HCT116 (cell line): ENCODE measurements at regions of chr22 and their contacts with region 1.

Region 1: DNA sequence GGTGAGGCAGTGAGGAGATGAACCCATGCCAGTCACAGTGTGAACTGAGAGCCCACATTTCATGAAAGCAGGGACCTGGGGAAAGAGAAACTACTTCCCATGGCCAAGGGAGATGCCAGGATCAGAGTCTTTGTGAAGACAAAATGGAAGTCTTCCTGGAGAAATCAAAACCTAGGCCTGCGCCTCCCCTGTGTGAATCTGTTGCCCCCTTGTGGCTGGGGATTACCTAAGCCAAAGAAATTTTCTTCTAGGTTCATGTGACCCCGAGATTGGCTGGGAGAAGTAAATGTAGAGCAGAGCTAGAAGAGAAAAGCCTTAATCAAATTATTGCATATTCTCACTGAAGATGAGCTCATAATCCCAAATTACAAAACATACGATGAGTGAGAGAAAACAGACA is 1075.3 kb downstream of the TBC1D22A start:
- DNase-seq: peak; percentile 13
- ATAC-seq: peak; percentile 53; the same call in 1 of the 2 replicates
- H3K4me3 ChIP-seq: no peak overlapping the region
- H3K27ac ChIP-seq: no peak overlapping the region
- H3K4me1 ChIP-seq: no peaks in the 10 kb centered on the region
- H3K27me3 ChIP-seq: no peaks in the 10 kb centered on the region
- CTCF ChIP-seq: peak; percentile 28 to 63 (median 58); a peak in 5 of 6 replicates
- POLR2A ChIP-seq: no peak
- RAD21 ChIP-seq: peak; percentile 56

Region 2: DNA sequence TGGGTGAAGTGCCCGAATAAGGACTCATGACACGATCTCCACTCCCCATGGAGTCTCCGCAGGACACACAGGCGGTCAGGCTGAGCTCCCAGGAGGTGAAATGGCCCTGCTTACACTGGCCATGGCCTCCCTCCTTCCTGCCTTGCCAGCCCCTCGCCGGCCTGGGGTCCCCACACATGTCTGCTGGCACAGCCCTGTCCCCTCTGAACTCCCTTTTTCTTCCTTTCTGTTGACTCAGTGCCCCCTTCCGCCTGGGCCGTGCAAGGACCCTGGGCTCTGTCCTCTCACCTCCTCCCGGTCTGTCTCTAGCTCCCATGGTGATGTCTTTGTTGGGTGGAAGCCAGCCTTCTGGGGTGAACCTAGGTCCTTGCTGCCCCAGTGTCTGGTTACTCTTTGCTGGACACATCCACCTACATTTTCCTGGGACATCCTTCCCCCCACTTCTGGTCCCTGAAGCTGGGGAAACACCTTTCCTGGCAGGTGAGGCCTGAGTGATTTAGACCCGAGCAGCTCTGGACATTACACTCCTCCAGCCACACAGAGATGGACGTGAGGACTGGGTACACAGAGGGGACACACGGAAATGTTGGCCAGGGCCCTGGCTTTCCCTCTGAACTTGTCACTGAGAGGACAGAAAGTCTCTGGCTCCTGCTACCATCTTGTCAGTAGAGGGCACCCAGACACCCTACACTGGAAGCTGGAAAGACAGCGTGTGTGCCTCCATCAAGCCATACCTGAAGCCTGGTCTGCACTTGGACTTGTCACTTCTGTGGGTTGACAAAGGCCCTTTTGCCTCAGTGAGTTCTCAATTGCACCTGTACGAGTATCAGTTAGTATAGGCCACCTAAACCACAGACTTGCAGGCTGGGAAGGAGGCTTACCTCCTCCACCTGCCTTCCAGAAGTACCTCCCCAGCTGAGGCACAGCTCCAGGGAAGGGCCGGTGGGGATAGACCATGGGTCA is 211.0 kb before region 1 on chr22:
- CTCF ChIA-PET with region 1: no interaction called
- POLR2A ChIA-PET with region 1: no interaction called
- RAD21 ChIA-PET with region 1: no interaction called
- intact Hi-C with region 1: loop called (anchors 5 kb)
- DNase-seq: peak; percentile 6
- ATAC-seq: peak; percentile 46
- H3K4me3 ChIP-seq: no peak overlapping the region
- H3K27ac ChIP-seq: no peak overlapping the region; the same call in 1 of the 2 replicates
- H3K4me1 ChIP-seq: peaks cover 13 to 22% of the 10 kb centered on the region in 2 experiments
- H3K27me3 ChIP-seq: no peaks in the 10 kb centered on the region
- CTCF ChIP-seq: peak in 2 of 3 experiments; percentile 15 to 18; a peak in 2 of 6 replicates
- POLR2A ChIP-seq: no peak
- RAD21 ChIP-seq: peak; percentile 56

Region 3: DNA sequence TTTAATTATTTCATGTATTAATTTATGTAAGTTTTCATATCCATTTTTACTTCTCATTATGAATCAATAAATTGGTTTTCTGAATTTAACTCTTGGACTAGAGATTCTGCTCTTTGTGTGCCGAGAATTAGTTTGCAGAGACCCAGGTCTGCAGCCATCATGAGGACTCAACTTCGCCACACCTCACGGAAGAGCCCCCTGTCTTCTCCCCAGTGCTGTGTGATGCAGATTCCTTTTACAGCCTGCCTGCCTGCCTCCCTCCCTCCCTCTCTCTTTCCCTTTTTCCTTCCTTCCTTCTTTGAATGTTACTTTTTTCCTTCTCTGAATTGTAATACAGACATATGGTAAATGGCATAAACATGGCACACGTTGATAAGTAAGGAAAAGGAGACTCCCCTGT is 127.6 kb before region 1 on chr22:
- CTCF ChIA-PET with region 1: no interaction called
- POLR2A ChIA-PET with region 1: no interaction called
- RAD21 ChIA-PET with region 1: no interaction called
- intact Hi-C with region 1: no loop called
- DNase-seq: no peak
- ATAC-seq: no peak
- H3K4me3 ChIP-seq: no peak overlapping the region
- H3K27ac ChIP-seq: no peak overlapping the region
- H3K4me1 ChIP-seq: no peaks in the 10 kb centered on the region
- H3K27me3 ChIP-seq: no peaks in the 10 kb centered on the region
- CTCF ChIP-seq: no peak
- POLR2A ChIP-seq: no peak
- RAD21 ChIP-seq: no peak

Region 4: DNA sequence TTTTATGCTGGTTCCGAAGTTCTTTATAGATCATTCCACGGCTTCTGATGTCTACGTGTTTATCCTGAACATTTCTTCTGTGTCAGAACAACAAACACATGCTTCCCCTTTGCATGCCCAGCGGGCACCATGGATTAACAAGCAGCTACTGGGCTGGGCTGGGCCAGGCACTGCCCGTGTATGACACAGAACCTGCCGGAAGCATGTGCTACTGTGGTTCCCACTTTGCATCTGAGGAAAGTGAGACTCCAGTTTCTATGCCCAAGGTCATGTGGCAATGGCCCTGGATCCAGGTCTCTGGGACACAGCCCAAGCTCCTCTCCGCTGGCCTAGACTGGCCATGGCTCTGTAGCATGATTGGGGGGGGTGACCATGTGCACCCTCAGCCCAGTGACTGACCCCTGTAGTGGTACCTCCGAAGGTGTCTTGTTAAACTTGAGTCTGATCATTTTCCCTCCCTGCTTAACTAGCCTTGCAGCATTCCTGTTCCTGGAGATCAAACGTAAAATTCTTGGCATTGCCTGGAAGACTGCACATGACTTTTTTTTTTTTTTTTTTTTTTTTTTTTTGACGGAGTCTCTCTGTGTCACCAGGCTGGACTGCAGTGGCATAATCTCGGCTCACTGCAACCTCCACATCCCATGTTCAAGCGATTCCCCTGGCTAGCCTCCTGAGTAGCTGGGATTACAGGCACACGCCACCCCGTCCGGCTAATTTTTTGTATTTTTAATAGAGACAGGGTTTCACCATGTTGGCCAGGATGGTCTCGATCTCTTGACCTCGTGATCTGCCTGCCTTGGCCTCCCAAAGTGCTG is 40.7 kb after region 1 on chr22:
- CTCF ChIA-PET with region 1: no interaction called
- POLR2A ChIA-PET with region 1: no interaction called
- RAD21 ChIA-PET with region 1: no interaction called
- intact Hi-C with region 1: no loop called
- DNase-seq: no peak
- ATAC-seq: no peak
- H3K4me3 ChIP-seq: no peak overlapping the region
- H3K27ac ChIP-seq: no peak overlapping the region
- H3K4me1 ChIP-seq: no peaks in the 10 kb centered on the region
- H3K27me3 ChIP-seq: no peaks in the 10 kb centered on the region
- CTCF ChIP-seq: no peak
- POLR2A ChIP-seq: no peak
- RAD21 ChIP-seq: no peak